Activated CD4-positive, alpha-beta T cell treated with anti-CD3 and anti-CD28 coated beads, Interleukin-2, amount 10 ng/mL, durations not matched to agents 7 days and 5 days (primary cell): ENCODE measurements at regions of chr11 and their contacts with region 1.

Region 1: DNA sequence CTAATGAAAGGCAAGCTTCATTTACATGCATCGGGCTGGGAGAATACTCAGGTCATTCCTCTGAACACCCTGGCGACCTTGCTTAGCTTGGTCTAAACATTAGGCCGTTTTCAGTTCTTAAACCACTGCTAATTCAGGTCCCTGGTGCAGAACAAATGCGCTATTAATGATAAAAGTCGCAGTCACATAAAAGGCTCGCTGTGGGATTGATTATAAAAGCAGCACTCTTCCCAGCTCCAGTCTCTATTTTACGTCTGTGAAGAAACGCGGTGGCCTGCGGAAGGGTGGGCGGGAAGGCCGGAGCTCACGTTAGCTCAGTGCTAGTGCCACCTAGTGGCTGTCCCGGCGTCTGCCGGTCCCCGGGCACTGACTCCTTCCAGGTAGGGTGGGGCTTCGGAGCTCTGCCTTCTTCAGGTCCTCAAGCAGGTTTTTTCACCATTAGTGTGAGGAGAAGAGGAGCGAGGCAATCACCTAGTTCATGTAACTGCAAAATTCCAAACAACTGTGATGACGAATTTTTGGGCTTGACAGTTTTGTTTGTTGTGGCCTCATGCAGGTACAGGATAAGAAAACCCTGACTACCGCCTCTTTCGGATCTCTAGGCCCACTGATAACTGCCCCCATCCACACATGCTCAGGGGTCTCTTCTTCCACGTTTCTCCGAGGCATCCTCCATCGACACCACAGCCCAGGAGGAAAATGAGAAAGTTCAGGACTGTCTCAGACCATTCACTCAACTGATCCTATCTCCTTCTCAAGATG is 66.5 kb upstream of the CLMP start:
- DNase-seq: peak; percentile 75
- H3K4me3 Mint-ChIP-seq: peak overlapping the region; percentile 43
- H3K27ac Mint-ChIP-seq: no peak overlapping the region
- H3K4me1 Mint-ChIP-seq: peaks cover 19% of the 10 kb centered on the region
- H3K27me3 Mint-ChIP-seq: peaks cover 20% of the 10 kb centered on the region

Region 2: GRCh38 chr11:123110356-123110755 is 151.2 kb before region 1 on chr11:
- CTCF ChIA-PET with region 1: interaction called, 10 read pairs
- POLR2A ChIA-PET with region 1: no interaction called
- DNase-seq: no peak
- H3K4me3 Mint-ChIP-seq: peak overlapping the region; percentile 39
- H3K27ac Mint-ChIP-seq: peak overlapping the region; percentile 31
- H3K4me1 Mint-ChIP-seq: peaks cover 9% of the 10 kb centered on the region
- H3K27me3 Mint-ChIP-seq: peaks cover 29% of the 10 kb centered on the region

Region 3: DNA sequence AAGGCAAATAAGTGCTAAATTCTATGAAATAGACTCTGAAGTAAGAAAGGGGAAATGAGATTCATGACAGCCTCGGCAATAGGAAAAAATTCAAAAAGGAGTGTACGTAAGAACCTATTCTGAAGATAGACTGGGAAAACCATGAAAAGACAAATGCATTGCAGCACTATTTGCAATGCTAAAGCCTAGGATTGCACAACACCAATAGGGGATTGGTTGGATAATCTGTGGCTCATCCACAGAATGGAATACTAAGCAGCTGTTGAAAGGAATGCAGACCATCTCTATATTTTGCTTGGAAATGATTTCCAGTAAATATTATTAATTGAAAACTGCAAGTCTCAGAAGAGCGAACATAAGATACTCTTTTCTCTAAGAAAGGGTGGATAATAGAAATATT is 25.2 kb after region 1 on chr11:
- CTCF ChIA-PET with region 1: no interaction called
- POLR2A ChIA-PET with region 1: no interaction called
- DNase-seq: no peak
- H3K4me3 Mint-ChIP-seq: no peak overlapping the region
- H3K27ac Mint-ChIP-seq: no peak overlapping the region
- H3K4me1 Mint-ChIP-seq: no peaks in the 10 kb centered on the region
- H3K27me3 Mint-ChIP-seq: peaks cover 40% of the 10 kb centered on the region

Region 4: GRCh38 chr11:123330071-123330470 is 68.5 kb after region 1 on chr11:
- CTCF ChIA-PET with region 1: no interaction called
- POLR2A ChIA-PET with region 1: no interaction called
- DNase-seq: no peak
- H3K4me3 Mint-ChIP-seq: no peak overlapping the region
- H3K27ac Mint-ChIP-seq: no peak overlapping the region
- H3K4me1 Mint-ChIP-seq: no peaks in the 10 kb centered on the region
- H3K27me3 Mint-ChIP-seq: peaks cover 7% of the 10 kb centered on the region